ENCODE measurements at regions of chrX and their contacts with region 1.

Region 1: GRCh38 chrX:44872817-44873414 is at the start of gene KDM6A:
- DNase-seq: peak; percentile 99 to 100
- ATAC-seq: peak; percentile 89 to 93 (median 92)
- H3K4me3 ChIP-seq: peak within 1 kb of the TSS; percentile 88
- H3K27ac ChIP-seq: peak within 1 kb of the TSS; percentile 92
- H3K4me1 ChIP-seq: peaks cover 24% of the 10 kb centered on the region
- H3K27me3 ChIP-seq: no peaks in the 10 kb centered on the region
- CTCF ChIP-seq: no peak
- total RNA-seq, gene KDM6A: 13.2 to 21.3 (median 15.9) TPM

Region 2: GRCh38 chrX:45031830-45032378 is 159.0 kb after region 1 on chrX:
- intact Hi-C with region 1: no loop called
- DNase-seq: no peak
- ATAC-seq: no peak
- H3K4me3 ChIP-seq: no peak overlapping the region
- H3K27ac ChIP-seq: no peak overlapping the region
- H3K4me1 ChIP-seq: no peaks in the 10 kb centered on the region
- H3K27me3 ChIP-seq: no peaks in the 10 kb centered on the region
- CTCF ChIP-seq: no peak

Region 3: GRCh38 chrX:45070116-45071007 is 197.4 kb after region 1 on chrX:
- intact Hi-C with region 1: loop called (anchors 5 kb)
- DNase-seq: no peak
- ATAC-seq: peak in 3 of 4 donors; percentile 51 to 78 (median 73)
- H3K4me3 ChIP-seq: no peak overlapping the region
- H3K27ac ChIP-seq: no peak overlapping the region
- H3K4me1 ChIP-seq: peaks cover 7% of the 10 kb centered on the region
- H3K27me3 ChIP-seq: no peaks in the 10 kb centered on the region
- CTCF ChIP-seq: peak; percentile 69

Region 4: GRCh38 chrX:45232139-45232538 is 359.2 kb after region 1 on chrX:
- intact Hi-C with region 1: no loop called
- DNase-seq: no peak
- ATAC-seq: no peak
- H3K4me3 ChIP-seq: no peak overlapping the region
- H3K27ac ChIP-seq: no peak overlapping the region
- H3K4me1 ChIP-seq: no peaks in the 10 kb centered on the region
- H3K27me3 ChIP-seq: peaks cover 0 to 5% (median 0%) of the 10 kb centered on the region in 3 donors
- CTCF ChIP-seq: no peak